ENCODE measurements at regions of chr11 and their contacts with region 1.

Region 1: GRCh38 chr11:67507864-67508485 is at the start of gene CDK2AP2:
- DNase-seq: peak; percentile 100
- ATAC-seq: peak; percentile 72
- H3K4me3 ChIP-seq: peak within 1 kb of the TSS; percentile 76
- H3K27ac ChIP-seq: peak within 1 kb of the TSS; percentile 85
- H3K4me1 ChIP-seq: peaks cover 33% of the 10 kb centered on the region
- H3K27me3 ChIP-seq: no peaks in the 10 kb centered on the region
- CTCF ChIP-seq: no peak
- total RNA-seq, gene CDK2AP2: 74.9 and 87.4 TPM in 2 replicates

Region 2: GRCh38 chr11:67353317-67354074 is 154.5 kb before region 1 on chr11 and contains the start of gene POLD4:
- CTCF ChIA-PET with region 1: interaction called, 10 read pairs
- POLR2A ChIA-PET with region 1: no interaction called
- intact Hi-C with region 1: no loop called
- DNase-seq: peak; percentile 98
- ATAC-seq: peak; percentile 54
- H3K4me3 ChIP-seq: peak within 1 kb of the TSS; percentile 77
- H3K27ac ChIP-seq: peak within 1 kb of the TSS; percentile 93
- H3K4me1 ChIP-seq: peaks cover 63% of the 10 kb centered on the region
- H3K27me3 ChIP-seq: no peaks in the 10 kb centered on the region
- CTCF ChIP-seq: no peak
- total RNA-seq, gene POLD4: 78.5 and 81.5 TPM in 2 replicates

Region 3: DNA sequence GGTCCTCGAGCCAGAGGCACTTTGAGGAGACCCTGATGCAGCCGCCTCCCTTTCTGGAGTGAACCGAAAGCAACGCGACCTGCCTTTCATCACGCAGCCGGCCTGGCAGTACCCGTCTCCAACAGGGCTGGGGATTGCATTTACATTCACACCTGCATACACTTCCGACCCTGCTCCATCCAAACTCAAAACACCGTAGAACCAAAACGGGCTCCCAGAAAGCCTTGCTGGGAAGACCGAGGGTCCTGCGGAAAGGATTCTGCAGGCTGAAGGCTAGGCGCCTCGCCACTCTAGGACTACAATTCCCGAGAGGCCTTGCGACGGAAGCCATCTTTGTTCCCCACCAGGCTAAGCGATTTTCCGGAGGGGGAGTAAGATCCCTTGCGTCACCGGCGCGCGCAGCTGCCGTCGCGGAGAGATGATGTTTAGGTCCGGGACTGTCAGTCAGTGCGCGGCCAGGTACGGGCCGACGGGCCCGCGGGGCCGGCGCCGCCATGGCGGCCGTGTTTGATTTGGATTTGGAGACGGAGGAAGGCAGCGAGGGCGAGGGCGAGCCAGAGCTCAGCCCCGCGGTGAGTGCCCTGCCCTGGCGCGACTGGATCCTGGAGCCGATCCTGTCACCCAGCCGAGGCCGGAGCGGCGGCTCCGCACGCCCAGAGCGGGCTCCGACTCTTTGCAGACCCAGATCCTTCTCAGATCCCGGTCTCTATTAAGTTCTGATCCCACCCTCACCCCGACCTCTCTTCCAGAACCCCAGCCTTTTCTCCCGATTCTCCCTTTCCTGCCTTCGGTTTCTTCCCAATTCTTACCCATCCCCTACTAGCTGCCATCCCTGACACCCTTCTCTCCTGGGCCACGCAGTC is 79.7 kb before region 1 on chr11 and contains the start of gene RPS6KB2:
- CTCF ChIA-PET with region 1: no interaction called
- POLR2A ChIA-PET with region 1: no interaction called
- intact Hi-C with region 1: loop called (anchors 5 kb)
- DNase-seq: peak; percentile 99
- ATAC-seq: peak; percentile 87
- H3K4me3 ChIP-seq: peak within 1 kb of the TSS; percentile 96
- H3K27ac ChIP-seq: peak within 1 kb of the TSS; percentile 18
- H3K4me1 ChIP-seq: peaks cover 10% of the 10 kb centered on the region
- H3K27me3 ChIP-seq: no peaks in the 10 kb centered on the region
- CTCF ChIP-seq: no peak
- total RNA-seq, gene RPS6KB2: 170 and 208 TPM in 2 replicates

Region 4: GRCh38 chr11:67468835-67469811 is 38.9 kb before region 1 on chr11 and contains the start of gene TMEM134:
- CTCF ChIA-PET with region 1: no interaction called
- POLR2A ChIA-PET with region 1: no interaction called
- intact Hi-C with region 1: loop called (anchors 1 kb)
- DNase-seq: peak; percentile 92
- ATAC-seq: peak; percentile 65
- H3K4me3 ChIP-seq: peak within 1 kb of the TSS; percentile 85
- H3K27ac ChIP-seq: peak within 1 kb of the TSS; percentile 90
- H3K4me1 ChIP-seq: peaks cover 31% of the 10 kb centered on the region
- H3K27me3 ChIP-seq: no peaks in the 10 kb centered on the region
- CTCF ChIP-seq: peak; percentile 65
- total RNA-seq, gene TMEM134: 73.5 and 107 TPM in 2 replicates

Region 5: GRCh38 chr11:67563354-67564114 is 55.6 kb after region 1 on chr11:
- CTCF ChIA-PET with region 1: no interaction called
- POLR2A ChIA-PET with region 1: no interaction called
- intact Hi-C with region 1: loop called (anchors 2 kb)
- DNase-seq: peak; percentile 92
- ATAC-seq: peak; percentile 68
- H3K4me3 ChIP-seq: peak overlapping the region; percentile 30; the same call in 1 of the 2 replicates
- H3K27ac ChIP-seq: peak overlapping the region; percentile 79
- H3K4me1 ChIP-seq: peaks cover 30% of the 10 kb centered on the region
- H3K27me3 ChIP-seq: no peaks in the 10 kb centered on the region
- CTCF ChIP-seq: no peak